CD8-positive, alpha-beta T cell (primary cell): ENCODE measurements at regions of chr20 and their contacts with region 1.

Region 1: GRCh38 chr20:33443512-33444239 is at the start of gene SNTA1:
- DNase-seq: peak; percentile 67 to 90 (median 87)
- ATAC-seq: peak; percentile 69
- H3K4me3 ChIP-seq: peak within 1 kb of the TSS; percentile 85 to 97
- H3K4me3 Mint-ChIP-seq: peak within 1 kb of the TSS; percentile 94
- H3K27ac ChIP-seq: peak within 1 kb of the TSS; percentile 59 to 66
- H3K27ac Mint-ChIP-seq: peak within 1 kb of the TSS; percentile 92
- H3K4me1 ChIP-seq: peaks cover 16% of the 10 kb centered on the region
- H3K4me1 Mint-ChIP-seq: peaks cover 21% of the 10 kb centered on the region
- H3K27me3 ChIP-seq: no peaks in the 10 kb centered on the region
- H3K27me3 Mint-ChIP-seq: no peaks in the 10 kb centered on the region
- CTCF ChIP-seq: no peak
- total RNA-seq, gene SNTA1: 3.9 to 5.5 TPM

Region 2: DNA sequence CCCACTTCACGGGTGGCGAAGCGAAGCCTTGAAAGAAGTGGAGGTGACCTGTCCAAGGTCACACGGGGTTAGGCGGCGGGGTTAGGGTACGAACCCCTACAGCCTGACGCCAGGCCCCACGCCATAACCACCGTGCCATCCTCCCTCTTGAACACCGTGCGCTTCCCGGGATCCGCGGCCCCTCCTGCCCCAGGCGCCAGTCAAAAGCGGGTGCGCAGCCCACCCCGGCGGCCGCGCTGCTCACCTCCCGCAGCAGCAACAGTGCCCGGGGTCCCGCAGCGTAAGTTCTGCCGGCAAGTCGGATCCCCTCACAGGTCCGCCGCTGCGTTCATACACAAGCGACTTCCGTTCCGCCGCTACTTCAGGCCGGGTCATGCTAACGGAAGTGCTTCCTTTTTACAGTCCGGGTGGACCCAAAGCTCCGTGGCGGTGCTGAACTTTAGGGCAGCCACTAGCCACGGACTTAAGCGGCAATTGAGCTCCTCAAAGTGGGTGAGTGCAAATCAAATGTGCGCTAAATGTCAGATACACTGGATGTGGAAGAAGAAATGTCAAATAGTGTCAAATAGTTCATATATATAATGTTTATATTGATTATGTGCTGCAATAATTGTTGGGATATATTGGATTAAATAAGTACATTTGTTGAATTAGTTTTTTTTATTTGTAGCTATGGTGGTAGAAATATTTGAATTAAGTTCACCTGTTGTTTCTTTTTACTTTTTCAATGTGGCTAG is 42.3 kb before region 1 on chr20 and contains the start of gene CDK5RAP1:
- CTCF ChIA-PET with region 1: no interaction called
- POLR2A ChIA-PET with region 1: interaction called, 4 read pairs
- intact Hi-C with region 1: loop called (anchors 1 kb)
- DNase-seq: peak; percentile 71 to 93 (median 85)
- ATAC-seq: peak; percentile 96
- H3K4me3 ChIP-seq: peak within 1 kb of the TSS; percentile 66 to 67
- H3K4me3 Mint-ChIP-seq: peak within 1 kb of the TSS; percentile 97
- H3K27ac ChIP-seq: peak within 1 kb of the TSS; percentile 56 to 64
- H3K27ac Mint-ChIP-seq: peak within 1 kb of the TSS; percentile 93
- H3K4me1 ChIP-seq: peaks cover 26% of the 10 kb centered on the region
- H3K4me1 Mint-ChIP-seq: peaks cover 55% of the 10 kb centered on the region
- H3K27me3 ChIP-seq: no peaks in the 10 kb centered on the region
- H3K27me3 Mint-ChIP-seq: no peaks in the 10 kb centered on the region
- CTCF ChIP-seq: no peak
- total RNA-seq, gene CDK5RAP1: 60.7 to 69.9 TPM

Region 3: GRCh38 chr20:33475381-33476150 is 31.9 kb after region 1 on chr20:
- CTCF ChIA-PET with region 1: no interaction called
- POLR2A ChIA-PET with region 1: no interaction called
- intact Hi-C with region 1: no loop called
- DNase-seq: no peak
- ATAC-seq: no peak
- H3K4me3 ChIP-seq: no peak overlapping the region
- H3K4me3 Mint-ChIP-seq: no peak overlapping the region
- H3K27ac ChIP-seq: no peak overlapping the region
- H3K27ac Mint-ChIP-seq: no peak overlapping the region
- H3K4me1 ChIP-seq: no peaks in the 10 kb centered on the region
- H3K4me1 Mint-ChIP-seq: no peaks in the 10 kb centered on the region
- H3K27me3 ChIP-seq: no peaks in the 10 kb centered on the region
- H3K27me3 Mint-ChIP-seq: peaks cover 2% of the 10 kb centered on the region
- CTCF ChIP-seq: no peak

Region 4: GRCh38 chr20:33554914-33555420 is 111.3 kb after region 1 on chr20:
- CTCF ChIA-PET with region 1: no interaction called
- POLR2A ChIA-PET with region 1: interaction called, 6 read pairs
- intact Hi-C with region 1: loop called in 1 of 2 experiments (anchors 5 kb)
- DNase-seq: peak in 6 of 9 experiments; percentile 3 to 95 (median 43)
- ATAC-seq: peak; percentile 95
- H3K4me3 ChIP-seq: peak overlapping the region; percentile 11 to 24
- H3K4me3 Mint-ChIP-seq: peak overlapping the region; percentile 72
- H3K27ac ChIP-seq: peak overlapping the region; percentile 62 to 92
- H3K27ac Mint-ChIP-seq: peak overlapping the region; percentile 96
- H3K4me1 ChIP-seq: peaks cover 14% of the 10 kb centered on the region
- H3K4me1 Mint-ChIP-seq: peaks cover 28% of the 10 kb centered on the region
- H3K27me3 ChIP-seq: no peaks in the 10 kb centered on the region
- H3K27me3 Mint-ChIP-seq: no peaks in the 10 kb centered on the region
- CTCF ChIP-seq: no peak